ENCODE measurements at regions of chr1 and their contacts with region 1.

Region 1: DNA sequence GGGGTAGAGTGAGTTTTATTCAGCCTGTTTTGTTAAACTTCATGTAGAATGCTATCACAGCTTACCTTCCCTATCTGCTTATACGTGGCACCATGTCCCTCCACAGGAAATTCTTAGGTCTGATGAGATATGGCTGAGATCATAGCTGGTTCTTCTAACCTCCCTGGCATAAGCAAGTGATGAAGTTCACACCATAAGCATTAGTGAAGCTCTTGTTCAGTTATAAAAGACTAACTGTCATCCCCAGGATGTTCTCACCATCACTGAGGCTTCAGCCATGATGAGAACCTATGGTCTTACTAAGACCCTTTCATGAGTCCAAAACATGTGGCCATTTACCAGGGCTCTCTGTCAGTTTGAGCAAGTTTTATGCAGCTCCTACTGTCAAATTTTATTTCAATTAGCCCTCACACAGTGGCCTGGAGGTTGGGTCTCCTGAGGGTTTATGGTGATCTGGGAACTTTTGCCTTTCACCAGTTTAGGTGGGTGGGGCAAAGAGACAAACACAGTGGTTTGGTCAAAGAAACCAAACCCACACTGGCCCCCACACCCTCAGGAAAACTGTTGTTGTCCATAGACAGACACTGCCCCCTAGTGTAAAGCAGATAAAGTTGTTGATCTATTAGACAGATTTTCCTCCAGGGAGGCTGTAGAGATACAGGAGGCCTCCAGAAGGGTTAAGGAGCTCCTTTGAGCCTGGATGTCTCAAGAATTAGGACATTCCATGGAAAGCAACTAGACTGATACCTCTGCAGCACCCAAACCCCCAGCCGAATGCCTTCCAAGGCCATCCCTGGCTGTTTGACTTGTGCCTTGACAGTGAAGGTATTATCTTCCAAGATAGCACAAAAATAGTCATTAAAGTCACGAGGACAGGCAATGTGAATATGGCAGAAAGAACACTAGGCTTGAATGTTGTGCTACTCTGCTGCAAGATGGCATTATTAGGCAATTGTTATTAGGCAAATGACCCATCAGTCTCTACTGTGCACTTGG is 5.0 kb downstream of the SLC22A15 start:
- DNase-seq: peak; percentile 41
- H3K4me3 ChIP-seq: no peak overlapping the region
- H3K27ac ChIP-seq: no peak overlapping the region
- H3K4me1 ChIP-seq: no peaks in the 10 kb centered on the region
- H3K27me3 ChIP-seq: peaks cover 17 to 39% of the 10 kb centered on the region in 2 experiments
- CTCF ChIP-seq: peak; percentile 53 to 56
- POLR2A ChIP-seq: no peak

Region 2: GRCh38 chr1:115609021-115609420 is 372.3 kb before region 1 on chr1:
- CTCF ChIA-PET with region 1: interaction called, 11 read pairs
- POLR2A ChIA-PET with region 1: no interaction called
- dilution Hi-C with region 1: no loop called
- intact Hi-C with region 1: no loop called
- DNase-seq: no peak
- H3K4me3 ChIP-seq: no peak overlapping the region
- H3K27ac ChIP-seq: no peak overlapping the region
- H3K4me1 ChIP-seq: no peaks in the 10 kb centered on the region
- H3K27me3 ChIP-seq: peaks cover 2 to 3% of the 10 kb centered on the region in 2 experiments
- CTCF ChIP-seq: no peak
- POLR2A ChIP-seq: no peak

Region 3: DNA sequence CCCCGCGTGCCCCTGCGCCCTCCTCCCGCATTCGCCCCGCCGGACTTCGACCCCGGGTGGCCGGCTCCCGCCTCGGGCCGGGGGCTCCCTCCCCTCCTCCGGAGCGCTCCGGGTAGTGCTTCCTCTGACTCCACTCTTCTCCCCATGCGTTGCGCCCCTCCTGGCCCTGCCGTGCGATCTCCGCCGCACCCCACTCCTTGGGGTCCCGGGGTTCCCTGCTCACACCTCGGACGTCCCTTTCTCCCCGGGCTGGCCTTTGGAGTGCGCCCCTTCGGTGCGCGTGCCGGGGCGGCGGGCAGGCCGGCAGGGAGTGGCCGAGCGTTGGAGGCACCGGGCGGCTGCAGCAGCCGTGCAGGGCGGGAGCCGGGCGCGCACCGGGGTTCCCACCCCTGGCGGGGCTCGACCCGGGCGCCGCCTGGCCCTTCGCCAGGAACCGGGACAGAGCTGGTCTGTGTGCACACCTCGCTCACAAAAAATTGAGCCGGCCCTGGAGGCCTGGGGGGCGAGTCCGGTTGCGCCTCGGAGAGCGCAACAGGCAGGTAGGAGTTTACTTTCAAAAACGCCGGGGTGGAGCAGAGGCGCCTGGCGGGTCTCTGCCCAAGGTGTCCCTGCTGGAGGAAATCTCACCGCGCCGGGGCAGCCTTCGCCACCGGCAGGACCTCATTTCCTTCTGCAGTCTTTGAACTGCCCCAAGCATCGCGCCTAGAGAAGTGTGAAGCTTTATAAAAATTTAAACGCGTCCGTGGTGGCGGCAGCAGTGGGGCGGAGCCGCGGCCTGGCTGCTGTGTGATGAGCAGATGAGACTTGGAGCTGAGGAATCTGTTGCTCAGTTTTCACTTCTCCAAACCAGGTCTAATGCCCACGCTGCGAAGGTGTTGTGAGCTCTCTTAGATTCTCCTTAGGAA is 338.9 kb before region 1 on chr1:
- CTCF ChIA-PET with region 1: no interaction called
- POLR2A ChIA-PET with region 1: no interaction called
- dilution Hi-C with region 1: no loop called
- intact Hi-C with region 1: loop called (anchors 10 kb)
- DNase-seq: peak; percentile 46
- H3K4me3 ChIP-seq: peak overlapping the region; percentile 54 to 86 (median 71)
- H3K27ac ChIP-seq: peak overlapping the region; percentile 37
- H3K4me1 ChIP-seq: peaks cover 16% of the 10 kb centered on the region
- H3K27me3 ChIP-seq: peaks cover 0 to 6% of the 10 kb centered on the region in 2 experiments
- CTCF ChIP-seq: no peak
- POLR2A ChIP-seq: no peak

Region 4: DNA sequence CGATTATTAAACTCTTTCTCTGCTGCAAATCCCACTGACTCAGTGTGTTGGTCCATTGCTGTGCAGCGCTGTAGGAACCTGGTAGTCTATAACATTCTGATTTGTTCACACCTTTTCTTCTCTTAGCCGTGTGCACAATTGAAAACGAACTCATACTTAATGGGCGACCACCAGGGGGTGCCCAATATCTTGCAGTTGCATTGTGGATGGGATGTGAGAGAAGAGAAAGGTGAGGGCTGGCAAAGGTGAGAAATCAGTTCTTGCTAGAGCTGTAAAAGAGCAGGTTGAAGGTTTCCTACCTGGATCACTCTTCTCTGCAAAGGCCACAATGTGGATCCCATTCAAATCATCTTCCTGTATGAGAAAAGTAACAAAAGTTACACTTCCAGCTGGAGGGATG is 263.8 kb before region 1 on chr1:
- CTCF ChIA-PET with region 1: interaction called, 9 read pairs
- POLR2A ChIA-PET with region 1: no interaction called
- dilution Hi-C with region 1: no loop called
- intact Hi-C with region 1: loop called (anchors 1 kb)
- DNase-seq: peak; percentile 30
- H3K4me3 ChIP-seq: no peak overlapping the region
- H3K27ac ChIP-seq: no peak overlapping the region
- H3K4me1 ChIP-seq: no peaks in the 10 kb centered on the region
- H3K27me3 ChIP-seq: peaks cover 2 to 16% of the 10 kb centered on the region in 2 experiments
- CTCF ChIP-seq: peak; percentile 41 to 56
- POLR2A ChIP-seq: no peak

Region 5: GRCh38 chr1:115807723-115808122 is 173.6 kb before region 1 on chr1:
- CTCF ChIA-PET with region 1: interaction called, 133 read pairs
- POLR2A ChIA-PET with region 1: no interaction called
- dilution Hi-C with region 1: no loop called
- intact Hi-C with region 1: loop called (anchors 1 kb)
- DNase-seq: peak; percentile 62
- H3K4me3 ChIP-seq: no peak overlapping the region
- H3K27ac ChIP-seq: no peak overlapping the region
- H3K4me1 ChIP-seq: peaks cover 14% of the 10 kb centered on the region
- H3K27me3 ChIP-seq: peaks cover 5 to 8% of the 10 kb centered on the region in 2 experiments
- CTCF ChIP-seq: peak; percentile 61 to 70
- POLR2A ChIP-seq: no peak

Region 6: DNA sequence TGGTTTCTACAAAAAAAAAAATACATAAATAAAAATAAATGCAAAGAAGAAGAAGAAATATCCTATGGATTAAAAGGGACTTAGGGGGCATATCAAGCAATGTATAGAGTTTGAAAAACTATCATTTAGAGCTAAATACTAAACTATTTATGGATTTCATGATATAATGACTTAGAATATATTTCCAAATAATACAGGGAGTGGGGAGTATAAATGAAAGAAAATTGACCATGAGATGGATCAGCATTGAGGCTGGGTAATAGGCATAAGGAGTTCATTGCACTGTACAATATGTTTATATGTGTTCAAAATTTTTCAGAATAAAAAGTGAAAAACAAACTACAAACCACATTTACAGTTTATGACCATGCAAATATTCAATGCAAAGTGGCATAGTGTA is 159.2 kb before region 1 on chr1:
- CTCF ChIA-PET with region 1: interaction called, 10 read pairs
- POLR2A ChIA-PET with region 1: no interaction called
- dilution Hi-C with region 1: no loop called
- intact Hi-C with region 1: no loop called
- DNase-seq: no peak
- H3K4me3 ChIP-seq: no peak overlapping the region
- H3K27ac ChIP-seq: no peak overlapping the region
- H3K4me1 ChIP-seq: no peaks in the 10 kb centered on the region
- H3K27me3 ChIP-seq: peaks cover 9 to 24% of the 10 kb centered on the region in 2 experiments
- CTCF ChIP-seq: no peak
- POLR2A ChIP-seq: no peak

Region 7: DNA sequence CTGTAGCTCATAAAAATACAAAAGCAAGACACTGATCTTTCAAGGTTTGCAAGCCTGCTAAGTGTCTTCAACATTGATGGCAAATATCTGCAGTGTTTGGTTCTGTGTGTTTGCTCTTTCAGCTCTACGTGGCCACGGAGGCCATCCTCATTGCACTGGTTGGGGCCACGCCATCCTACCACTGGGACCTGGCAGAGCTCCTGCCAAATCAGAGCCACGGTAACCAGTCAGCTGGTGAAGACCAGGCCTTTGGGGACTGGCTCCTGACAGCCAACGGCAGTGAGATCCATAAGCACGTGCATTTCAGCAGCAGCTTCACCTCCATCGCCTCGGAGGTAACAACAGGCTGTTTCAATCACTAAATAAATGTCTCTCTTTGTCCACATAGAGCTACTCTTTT is 10.6 kb after region 1 on chr1:
- CTCF ChIA-PET with region 1: interaction called, 16 read pairs
- POLR2A ChIA-PET with region 1: no interaction called
- dilution Hi-C with region 1: no loop called
- intact Hi-C with region 1: no loop called
- DNase-seq: no peak
- H3K4me3 ChIP-seq: no peak overlapping the region
- H3K27ac ChIP-seq: no peak overlapping the region
- H3K4me1 ChIP-seq: no peaks in the 10 kb centered on the region
- H3K27me3 ChIP-seq: no peaks in the 10 kb centered on the region
- CTCF ChIP-seq: no peak
- POLR2A ChIP-seq: no peak

Region 8: DNA sequence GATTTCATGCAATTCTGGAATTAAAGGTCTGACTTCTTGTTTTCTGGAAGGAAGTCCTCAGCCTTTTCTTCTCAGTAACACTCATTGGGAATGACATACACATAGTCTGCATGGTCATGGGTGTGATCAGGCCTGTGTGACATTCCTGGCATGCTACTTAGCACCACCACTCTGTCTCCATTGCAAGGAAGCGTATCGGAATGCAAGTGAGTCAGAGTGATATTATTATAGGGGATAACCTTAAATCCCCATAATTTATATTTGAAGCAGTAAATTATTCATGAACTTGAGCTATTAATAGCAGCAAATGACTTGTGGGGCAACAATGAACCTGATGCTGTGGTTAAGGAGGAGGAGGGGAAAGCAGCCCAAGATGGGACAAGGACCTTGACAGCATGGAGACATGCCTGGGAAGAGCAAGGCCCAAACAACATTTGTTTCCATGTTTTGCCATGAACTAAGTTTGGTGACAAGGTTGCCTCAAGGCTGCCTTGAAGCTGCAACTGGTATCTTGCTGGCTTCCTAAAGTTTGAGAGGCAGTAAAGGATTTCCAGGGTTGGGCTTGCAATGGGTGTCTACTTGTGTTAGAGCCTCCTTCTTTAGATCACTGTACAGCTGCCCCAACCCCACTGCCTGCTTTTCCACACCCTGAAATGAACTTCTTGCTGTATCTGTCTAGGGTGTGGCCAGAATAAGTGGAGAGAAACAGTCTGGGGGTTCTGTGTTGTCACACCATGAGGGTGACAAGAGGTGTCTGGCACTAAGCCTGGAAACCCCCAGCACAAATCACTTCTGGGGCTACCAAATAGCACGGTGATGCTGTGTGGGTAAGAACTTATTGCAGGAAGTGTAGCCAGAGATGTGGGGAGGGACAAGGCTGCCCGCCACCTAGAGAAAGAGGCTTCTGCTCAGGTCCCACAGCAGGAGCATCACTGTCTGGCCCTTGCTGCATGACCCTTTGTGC is 134.5 kb after region 1 on chr1:
- CTCF ChIA-PET with region 1: no interaction called
- POLR2A ChIA-PET with region 1: no interaction called
- dilution Hi-C with region 1: no loop called
- intact Hi-C with region 1: no loop called
- DNase-seq: no peak
- H3K4me3 ChIP-seq: no peak overlapping the region
- H3K27ac ChIP-seq: no peak overlapping the region
- H3K4me1 ChIP-seq: no peaks in the 10 kb centered on the region
- H3K27me3 ChIP-seq: no peaks in the 10 kb centered on the region
- CTCF ChIP-seq: no peak
- POLR2A ChIP-seq: no peak

Region 9: DNA sequence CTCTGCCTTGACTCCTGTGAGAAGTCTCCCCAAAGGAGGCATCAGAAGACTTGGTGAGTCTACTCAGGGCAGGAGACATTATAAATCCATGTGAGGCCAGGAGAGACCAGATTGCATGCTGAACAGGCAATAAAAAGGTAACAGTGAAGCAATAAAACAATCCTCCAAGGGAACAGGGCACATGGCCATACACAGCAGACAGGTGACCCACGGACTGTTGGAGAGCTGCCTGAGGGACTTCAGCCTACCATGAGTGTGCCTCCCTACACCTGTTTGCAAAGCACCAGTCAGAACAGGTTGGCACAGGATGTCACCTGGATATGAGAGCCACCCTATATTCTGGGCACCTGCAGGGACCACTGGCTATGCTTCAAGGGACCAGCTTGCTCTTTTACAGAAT is 197.5 kb after region 1 on chr1:
- CTCF ChIA-PET with region 1: no interaction called
- POLR2A ChIA-PET with region 1: no interaction called
- dilution Hi-C with region 1: no loop called
- intact Hi-C with region 1: no loop called
- DNase-seq: no peak
- H3K4me3 ChIP-seq: no peak overlapping the region
- H3K27ac ChIP-seq: no peak overlapping the region
- H3K4me1 ChIP-seq: no peaks in the 10 kb centered on the region
- H3K27me3 ChIP-seq: peaks cover 1 to 4% of the 10 kb centered on the region in 2 experiments
- CTCF ChIP-seq: no peak
- POLR2A ChIP-seq: no peak